HEK293 (cell line): ENCODE measurements at regions of chr9 and their contacts with region 1.

Region 1: DNA sequence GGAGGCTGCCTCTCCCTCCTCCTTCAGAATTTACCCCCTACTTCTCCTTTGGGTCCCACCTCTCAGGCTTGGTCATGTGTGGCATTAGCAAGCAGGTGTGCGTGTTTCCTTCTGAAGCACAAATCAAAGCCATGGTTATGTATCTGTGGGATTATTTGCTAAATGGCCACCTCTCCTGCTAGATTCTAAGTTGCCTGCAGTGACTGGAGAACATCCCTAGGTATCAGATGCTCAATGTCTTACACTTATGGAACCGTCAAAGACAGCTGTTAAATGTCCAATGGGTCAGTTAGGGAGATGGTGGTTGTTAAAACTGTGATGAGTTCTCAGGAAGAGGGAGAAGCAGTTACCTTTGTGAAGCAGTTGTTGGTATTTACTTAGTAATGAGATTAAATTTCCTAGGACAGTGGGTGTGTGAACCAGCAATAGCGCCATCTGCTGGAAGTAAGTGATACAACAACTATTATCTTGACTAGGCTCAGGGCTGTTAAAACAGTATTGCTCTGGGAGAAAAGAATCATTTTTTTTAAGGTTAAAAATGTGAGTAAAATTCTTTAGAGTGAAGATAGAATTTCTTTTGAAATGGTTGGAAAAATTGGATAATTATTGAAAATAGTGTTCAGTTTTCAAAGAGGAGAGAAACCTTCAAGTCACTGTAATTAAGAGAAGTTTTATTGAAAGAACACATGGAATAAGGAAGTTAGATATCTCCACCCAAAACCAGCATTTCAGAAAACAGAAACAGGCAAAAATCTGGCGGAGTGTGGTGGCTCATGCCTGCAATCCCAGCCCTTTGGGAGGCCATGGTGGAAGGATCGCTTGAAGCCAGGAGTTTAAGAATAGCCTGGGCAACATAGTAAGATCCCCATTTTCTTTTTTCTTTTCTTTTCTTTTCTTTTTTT is 71.3 kb downstream of the TMC1 start:
- H3K4me3 ChIP-seq: no peak overlapping the region
- H3K27ac ChIP-seq: no peak overlapping the region
- H3K4me1 ChIP-seq: no peaks in the 10 kb centered on the region
- CTCF ChIP-seq: 0 out of 2 replicates have a peak, but pooled peaks have one; percentile 6

Region 2: DNA sequence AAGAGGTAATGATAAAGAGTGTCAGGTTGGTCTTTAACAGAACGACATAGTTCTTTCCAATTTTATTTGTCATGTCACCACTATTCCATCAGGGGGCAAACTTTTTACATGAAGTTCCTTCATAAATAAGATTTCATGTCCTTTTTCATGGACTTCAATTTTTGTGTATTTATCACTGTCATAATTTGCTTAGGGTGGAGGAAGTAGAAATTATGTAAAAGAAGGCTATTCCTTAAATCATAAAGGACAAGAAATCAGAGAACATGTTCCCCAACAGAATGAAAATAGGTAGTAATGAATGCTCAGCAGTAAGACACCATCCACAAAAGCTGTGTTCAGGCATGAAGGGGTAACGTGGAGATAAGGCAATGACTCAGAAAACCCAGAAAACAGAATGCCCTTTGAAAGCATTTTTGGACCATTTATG is 300.5 kb before region 1 on chr9:
- CTCF ChIA-PET with region 1: interaction called, 13 read pairs
- POLR2A ChIA-PET with region 1: interaction called, 3 read pairs
- H3K4me3 ChIP-seq: no peak overlapping the region
- H3K27ac ChIP-seq: no peak overlapping the region
- H3K4me1 ChIP-seq: peaks cover 2% of the 10 kb centered on the region; the same call in 1 of the 2 replicates
- CTCF ChIP-seq: no peak

Region 3: GRCh38 chr9:72618811-72619210 is 26.1 kb after region 1 on chr9:
- CTCF ChIA-PET with region 1: no interaction called
- POLR2A ChIA-PET with region 1: no interaction called
- H3K4me3 ChIP-seq: no peak overlapping the region
- H3K27ac ChIP-seq: no peak overlapping the region
- H3K4me1 ChIP-seq: no peaks in the 10 kb centered on the region
- CTCF ChIP-seq: no peak